ENCODE measurements at regions of chr2 and their contacts with region 1.

Region 1: DNA sequence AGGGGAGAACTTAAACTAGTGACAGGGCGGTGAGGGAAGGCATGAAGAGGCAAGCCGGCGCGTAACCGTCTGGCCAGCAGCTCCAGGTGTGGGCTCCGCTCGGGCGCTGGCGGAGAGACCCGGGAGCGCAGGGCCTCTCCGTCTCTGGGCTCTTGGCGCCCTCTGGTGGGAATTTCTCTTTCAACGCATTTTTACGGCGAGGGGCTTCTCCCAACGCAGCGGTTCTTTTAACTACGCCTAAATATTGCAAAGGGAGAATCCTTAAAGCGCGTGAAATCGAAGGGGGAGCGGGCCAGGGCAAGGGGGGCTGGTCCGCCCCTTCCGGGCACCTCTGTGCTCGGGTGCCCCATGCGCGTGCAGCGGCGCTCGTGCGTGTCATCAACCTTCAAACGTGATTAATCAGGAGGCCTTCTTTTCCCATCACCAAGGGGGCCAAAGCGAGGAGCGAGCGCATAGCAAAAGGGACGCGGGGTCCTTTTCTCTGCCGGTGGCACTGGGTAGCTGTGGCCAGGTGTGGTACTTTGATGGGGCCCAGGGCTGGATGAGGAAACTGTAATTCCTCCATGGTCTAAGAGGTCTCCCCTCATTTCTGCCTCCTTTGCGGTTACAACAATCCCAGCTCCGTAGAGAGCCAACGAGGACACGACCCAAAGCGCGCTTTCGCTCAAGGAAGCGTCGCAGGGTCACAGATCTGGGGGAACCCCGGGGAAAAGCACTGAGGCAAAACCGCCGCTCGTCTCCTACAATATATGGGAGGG is 762 bp upstream of the GAD1 start:
- DNase-seq: no peak
- H3K4me3 ChIP-seq: 0 out of 2 replicates have a peak overlapping the region, but pooled peaks have one; percentile 13
- H3K27ac ChIP-seq: no peak overlapping the region
- H3K27me3 ChIP-seq: peaks cover 81% of the 10 kb centered on the region
- CTCF ChIP-seq: peak; percentile 68

Region 2: GRCh38 chr2:170324640-170325046 is 491.3 kb before region 1 on chr2:
- CTCF ChIA-PET with region 1: interaction called, 14 read pairs
- POLR2A ChIA-PET with region 1: no interaction called
- DNase-seq: peak; percentile 0
- H3K4me3 ChIP-seq: no peak overlapping the region
- H3K27ac ChIP-seq: no peak overlapping the region
- H3K27me3 ChIP-seq: no peaks in the 10 kb centered on the region
- CTCF ChIP-seq: peak; percentile 71

Region 3: DNA sequence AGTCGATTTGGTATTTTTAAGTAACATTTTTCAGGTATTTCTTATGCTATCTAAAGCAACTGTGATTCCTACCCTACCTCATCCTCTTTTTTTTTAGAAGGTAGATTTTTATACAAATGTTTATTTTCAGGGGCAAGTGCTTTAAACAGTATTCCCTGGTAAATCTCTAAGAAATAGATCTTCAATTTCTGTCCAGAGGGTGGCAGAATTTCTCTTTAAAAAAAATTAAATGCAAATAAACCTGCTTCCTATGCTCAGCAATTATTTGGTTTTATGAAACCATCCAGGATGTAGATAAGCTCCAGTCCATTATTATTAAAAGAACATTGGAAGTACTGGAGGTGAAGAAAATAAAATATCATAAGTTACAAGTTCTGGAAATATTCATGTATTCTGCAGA is 446.0 kb before region 1 on chr2:
- CTCF ChIA-PET with region 1: interaction called, 33 read pairs
- POLR2A ChIA-PET with region 1: no interaction called
- DNase-seq: no peak
- H3K4me3 ChIP-seq: no peak overlapping the region
- H3K27ac ChIP-seq: no peak overlapping the region
- H3K27me3 ChIP-seq: peaks cover 8% of the 10 kb centered on the region
- CTCF ChIP-seq: peak; percentile 39

Region 4: DNA sequence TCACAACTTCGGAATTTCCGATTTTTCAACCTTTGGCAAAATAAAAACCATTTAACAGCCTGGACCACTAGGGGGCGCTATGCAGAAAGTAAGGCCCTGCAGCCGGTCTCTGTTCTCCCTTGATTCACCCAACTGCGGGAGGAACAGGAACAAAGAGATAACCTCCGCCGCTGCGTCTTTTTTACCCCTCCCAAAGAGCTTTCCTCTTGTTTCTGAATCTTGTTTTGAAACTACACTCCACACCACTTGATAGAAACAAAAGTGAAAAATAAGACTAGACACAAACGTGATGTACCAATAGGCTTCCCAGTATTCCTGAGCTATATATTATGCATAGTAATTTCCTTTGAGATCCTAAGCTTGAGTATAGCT is 406.8 kb before region 1 on chr2:
- CTCF ChIA-PET with region 1: interaction called, 160 read pairs
- POLR2A ChIA-PET with region 1: no interaction called
- DNase-seq: peak; percentile 16
- H3K4me3 ChIP-seq: no peak overlapping the region
- H3K27ac ChIP-seq: no peak overlapping the region
- H3K27me3 ChIP-seq: peaks cover 4% of the 10 kb centered on the region
- CTCF ChIP-seq: peak; percentile 79

Region 5: GRCh38 chr2:170461884-170462283 is 354.0 kb before region 1 on chr2:
- CTCF ChIA-PET with region 1: no interaction called
- POLR2A ChIA-PET with region 1: no interaction called
- DNase-seq: no peak
- H3K4me3 ChIP-seq: no peak overlapping the region
- H3K27ac ChIP-seq: no peak overlapping the region
- H3K27me3 ChIP-seq: no peaks in the 10 kb centered on the region
- CTCF ChIP-seq: no peak

Measured in AG04450 (cell line).